ENCODE measurements at regions of chr1 and their contacts with region 1.

Region 1: GRCh38 chr1:178725603-178726517 is 816 bp downstream of the RALGPS2 start:
- DNase-seq: peak; percentile 89
- ATAC-seq: peak; percentile 68
- H3K4me3 ChIP-seq: peak overlapping the region; percentile 70 to 99 (median 79)
- H3K4me3 Mint-ChIP-seq: peak overlapping the region; percentile 96
- H3K27ac ChIP-seq: peak overlapping the region; percentile 78 to 90
- H3K27ac Mint-ChIP-seq: peak overlapping the region; percentile 94
- H3K4me1 ChIP-seq: peaks cover 28 to 33% of the 10 kb centered on the region in 2 donors
- H3K4me1 Mint-ChIP-seq: peaks cover 52% of the 10 kb centered on the region
- H3K27me3 ChIP-seq: no peaks in the 10 kb centered on the region
- H3K27me3 Mint-ChIP-seq: no peaks in the 10 kb centered on the region
- CTCF ChIP-seq: no peak

Region 2: GRCh38 chr1:178581351-178582303 is 144.2 kb before region 1 on chr1:
- CTCF ChIA-PET with region 1: interaction called, 20 read pairs
- POLR2A ChIA-PET with region 1: interaction called, 48 read pairs
- intact Hi-C with region 1: loop called (anchors 1 kb)
- DNase-seq: peak; percentile 87
- ATAC-seq: peak; percentile 65
- H3K4me3 ChIP-seq: peak overlapping the region in 3 of 5 experiments; percentile 24 to 53 (median 29)
- H3K4me3 Mint-ChIP-seq: peak overlapping the region; percentile 70
- H3K27ac ChIP-seq: peak overlapping the region; percentile 95 to 97
- H3K27ac Mint-ChIP-seq: peak overlapping the region; percentile 95
- H3K4me1 ChIP-seq: peaks cover 91 to 92% of the 10 kb centered on the region in 2 donors
- H3K4me1 Mint-ChIP-seq: peaks cover 93% of the 10 kb centered on the region
- H3K27me3 ChIP-seq: no peaks in the 10 kb centered on the region
- H3K27me3 Mint-ChIP-seq: no peaks in the 10 kb centered on the region
- CTCF ChIP-seq: no peak

Region 3: GRCh38 chr1:178619042-178619927 is 106.6 kb before region 1 on chr1:
- CTCF ChIA-PET with region 1: no interaction called
- POLR2A ChIA-PET with region 1: no interaction called
- intact Hi-C with region 1: no loop called
- DNase-seq: peak; percentile 61
- ATAC-seq: peak; percentile 75
- H3K4me3 ChIP-seq: no peak overlapping the region
- H3K4me3 Mint-ChIP-seq: peak overlapping the region; percentile 24
- H3K27ac ChIP-seq: peak overlapping the region; percentile 60 to 75
- H3K27ac Mint-ChIP-seq: peak overlapping the region; percentile 90
- H3K4me1 ChIP-seq: peaks cover 41 to 46% of the 10 kb centered on the region in 2 donors
- H3K4me1 Mint-ChIP-seq: peaks cover 62% of the 10 kb centered on the region
- H3K27me3 ChIP-seq: no peaks in the 10 kb centered on the region
- H3K27me3 Mint-ChIP-seq: no peaks in the 10 kb centered on the region
- CTCF ChIP-seq: no peak

Region 4: GRCh38 chr1:178664278-178664677 is 61.6 kb before region 1 on chr1:
- CTCF ChIA-PET with region 1: interaction called, 5 read pairs
- POLR2A ChIA-PET with region 1: no interaction called
- intact Hi-C with region 1: loop called (anchors 1 kb)
- DNase-seq: peak; percentile 82
- ATAC-seq: peak; percentile 89
- H3K4me3 ChIP-seq: peak overlapping the region in 2 of 5 experiments; percentile 13 to 17
- H3K4me3 Mint-ChIP-seq: peak overlapping the region; percentile 47
- H3K27ac ChIP-seq: peak overlapping the region; percentile 70 to 84
- H3K27ac Mint-ChIP-seq: peak overlapping the region; percentile 84
- H3K4me1 ChIP-seq: peaks cover 80 to 92% of the 10 kb centered on the region in 2 donors
- H3K4me1 Mint-ChIP-seq: peaks cover 83% of the 10 kb centered on the region
- H3K27me3 ChIP-seq: no peaks in the 10 kb centered on the region
- H3K27me3 Mint-ChIP-seq: no peaks in the 10 kb centered on the region
- CTCF ChIP-seq: no peak

Region 5: DNA sequence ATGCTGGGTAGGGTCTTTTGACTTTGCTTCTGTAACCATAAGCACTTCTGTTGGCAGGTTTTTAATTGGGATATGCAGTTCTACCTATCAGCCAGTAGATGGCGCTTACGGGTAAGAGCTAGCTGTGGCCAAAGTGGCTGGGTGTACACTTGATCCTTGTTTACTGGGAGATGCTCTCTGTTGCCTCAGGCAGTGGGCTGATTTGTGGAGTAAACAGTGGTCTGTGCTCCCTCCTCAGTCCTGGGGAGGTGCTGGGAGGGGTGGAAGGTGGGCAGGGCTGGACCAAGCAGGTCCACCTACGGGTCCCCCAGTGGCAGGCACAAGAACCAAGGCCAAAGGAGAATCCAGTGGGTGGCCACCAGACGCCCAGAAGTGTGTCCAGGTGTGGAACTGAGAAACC is 42.6 kb after region 1 on chr1:
- CTCF ChIA-PET with region 1: no interaction called
- POLR2A ChIA-PET with region 1: no interaction called
- intact Hi-C with region 1: loop called (anchors 5 kb)
- DNase-seq: peak; percentile 44
- ATAC-seq: peak; percentile 47
- H3K4me3 ChIP-seq: no peak overlapping the region
- H3K4me3 Mint-ChIP-seq: peak overlapping the region; percentile 30
- H3K27ac ChIP-seq: peak overlapping the region; percentile 0 to 17
- H3K27ac Mint-ChIP-seq: peak overlapping the region; percentile 74
- H3K4me1 ChIP-seq: peaks cover 33 to 44% of the 10 kb centered on the region in 2 donors
- H3K4me1 Mint-ChIP-seq: peaks cover 66% of the 10 kb centered on the region
- H3K27me3 ChIP-seq: no peaks in the 10 kb centered on the region
- H3K27me3 Mint-ChIP-seq: no peaks in the 10 kb centered on the region
- CTCF ChIP-seq: peak; percentile 73

Region 6: DNA sequence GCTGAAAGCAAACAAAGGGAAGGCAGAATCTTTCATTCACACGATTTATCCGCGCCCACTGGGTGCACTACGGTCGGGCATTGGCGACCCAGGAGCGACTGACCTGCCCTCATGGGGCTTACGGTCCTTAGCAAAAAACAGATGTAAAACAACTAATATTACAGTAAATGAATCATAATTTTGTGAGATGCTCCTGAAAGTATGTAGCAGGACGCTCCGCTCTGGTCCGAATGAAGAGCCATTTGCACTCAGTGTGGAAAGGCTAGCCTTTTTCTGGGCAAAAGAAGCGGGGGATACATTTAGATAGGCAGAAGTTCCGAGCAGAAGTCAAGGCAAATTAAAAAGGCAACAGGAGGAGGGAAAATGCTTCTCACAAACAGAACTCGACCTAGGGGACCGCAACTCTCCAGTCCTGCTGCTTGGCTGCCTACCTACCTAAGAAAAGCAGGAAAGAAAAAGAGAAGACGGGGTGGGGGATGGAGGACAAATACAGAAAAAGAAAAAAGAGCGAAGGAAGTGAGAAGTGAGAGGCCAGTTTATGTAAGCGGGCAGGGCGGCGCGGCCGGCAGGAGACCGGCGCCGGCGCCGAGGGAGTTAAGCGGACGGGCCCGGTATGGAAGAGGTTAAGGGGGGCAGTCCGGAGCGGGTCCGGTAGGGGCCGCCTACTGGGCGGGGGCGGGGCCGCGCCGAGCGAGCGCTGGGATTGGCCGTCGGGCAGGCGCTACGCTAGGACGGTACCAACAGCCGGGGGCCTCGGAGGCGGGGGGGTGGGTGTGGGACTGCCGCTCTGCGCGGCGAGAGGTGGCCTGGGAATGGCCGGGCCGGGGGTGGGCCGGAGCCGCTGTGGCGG is 299.5 kb after region 1 on chr1 and contains the start of gene FAM20B:
- CTCF ChIA-PET with region 1: no interaction called
- POLR2A ChIA-PET with region 1: no interaction called
- intact Hi-C with region 1: loop called (anchors 2 kb)
- DNase-seq: peak; percentile 95
- ATAC-seq: peak; percentile 80
- H3K4me3 ChIP-seq: peak within 1 kb of the TSS; percentile 77 to 97 (median 87)
- H3K4me3 Mint-ChIP-seq: peak within 1 kb of the TSS; percentile 97
- H3K27ac ChIP-seq: peak within 1 kb of the TSS; percentile 92 to 95
- H3K27ac Mint-ChIP-seq: peak within 1 kb of the TSS; percentile 95
- H3K4me1 ChIP-seq: peaks cover 29 to 36% of the 10 kb centered on the region in 2 donors
- H3K4me1 Mint-ChIP-seq: peaks cover 45% of the 10 kb centered on the region
- H3K27me3 ChIP-seq: no peaks in the 10 kb centered on the region
- H3K27me3 Mint-ChIP-seq: no peaks in the 10 kb centered on the region
- CTCF ChIP-seq: no peak
- total RNA-seq, gene FAM20B: 28.5 and 32.8 TPM in 2 replicates

Region 7: GRCh38 chr1:179066471-179066870 is 340.6 kb after region 1 on chr1:
- CTCF ChIA-PET with region 1: no interaction called
- POLR2A ChIA-PET with region 1: no interaction called
- intact Hi-C with region 1: no loop called
- DNase-seq: no peak
- ATAC-seq: no peak
- H3K4me3 ChIP-seq: no peak overlapping the region
- H3K4me3 Mint-ChIP-seq: no peak overlapping the region
- H3K27ac ChIP-seq: no peak overlapping the region
- H3K27ac Mint-ChIP-seq: no peak overlapping the region
- H3K4me1 ChIP-seq: no peaks in the 10 kb centered on the region
- H3K4me1 Mint-ChIP-seq: no peaks in the 10 kb centered on the region
- H3K27me3 ChIP-seq: no peaks in the 10 kb centered on the region
- H3K27me3 Mint-ChIP-seq: no peaks in the 10 kb centered on the region
- CTCF ChIP-seq: no peak

Measured in B cell (primary cell).